Activated CD4-positive, alpha-beta T cell treated with anti-CD3 and anti-CD28 coated beads for 36 hours (primary cell): ENCODE measurements at regions of chr19 and their contacts with region 1.

Region 1: DNA sequence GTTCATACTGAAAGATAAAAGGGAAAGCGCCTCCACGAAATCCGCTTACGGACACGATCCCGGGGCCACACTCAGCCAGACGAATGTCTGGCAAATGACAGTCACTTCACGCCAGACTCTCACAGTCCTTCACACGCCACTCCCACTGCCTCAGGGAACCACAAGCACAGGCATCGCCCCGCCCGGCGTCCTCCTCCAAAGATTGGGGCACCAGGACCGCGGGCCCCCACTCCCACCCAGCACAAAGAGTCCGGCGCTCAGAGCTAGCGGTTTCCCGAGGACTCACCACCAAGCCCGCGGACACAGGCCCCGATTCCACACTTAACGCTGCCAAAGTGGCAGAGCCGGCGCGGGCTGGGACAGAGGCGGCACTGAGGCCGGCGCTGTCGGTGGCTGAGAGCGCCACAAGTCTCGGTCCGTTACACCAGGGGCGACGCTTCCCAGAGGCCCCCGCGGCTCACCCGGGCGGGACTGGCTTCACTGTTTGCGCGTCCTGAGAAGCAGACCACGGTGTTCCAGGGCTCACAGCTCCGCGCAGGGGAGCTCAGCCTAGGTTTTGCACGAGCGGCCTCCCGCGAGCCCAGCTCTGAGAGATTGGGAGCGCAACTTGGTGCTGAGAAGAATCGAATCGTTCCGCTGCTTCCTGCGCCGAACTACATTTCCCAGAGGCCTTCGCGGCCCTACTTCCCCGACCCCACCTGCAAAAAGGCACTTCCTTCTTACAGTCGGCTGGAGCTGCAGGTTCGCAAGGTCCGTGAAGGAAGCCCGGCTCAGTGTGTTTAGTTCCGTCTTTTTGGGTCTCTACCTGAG is at the start of gene ZNF569:
- DNase-seq: peak; percentile 93
- ATAC-seq: peak; percentile 71
- H3K4me3 Mint-ChIP-seq: peak within 1 kb of the TSS; percentile 94
- H3K27ac Mint-ChIP-seq: peak within 1 kb of the TSS; percentile 95
- H3K4me1 Mint-ChIP-seq: peaks cover 31% of the 10 kb centered on the region
- H3K27me3 Mint-ChIP-seq: no peaks in the 10 kb centered on the region
- total RNA-seq, gene ZNF569: 7.4 to 9.1 TPM

Region 2: GRCh38 chr19:36573020-36573885 is 893.8 kb before region 1 on chr19 and contains the start of gene ZNF529:
- CTCF ChIA-PET with region 1: no interaction called
- POLR2A ChIA-PET with region 1: no interaction called
- intact Hi-C with region 1: loop called in 1 of 2 experiments (anchors 2 kb)
- DNase-seq: peak; percentile 91
- ATAC-seq: peak; percentile 90
- H3K4me3 Mint-ChIP-seq: peak within 1 kb of the TSS; percentile 83
- H3K27ac Mint-ChIP-seq: peak within 1 kb of the TSS; percentile 93
- H3K4me1 Mint-ChIP-seq: peaks cover 27% of the 10 kb centered on the region
- H3K27me3 Mint-ChIP-seq: no peaks in the 10 kb centered on the region
- total RNA-seq, gene ZNF529: 12.5 to 19.2 TPM

Region 3: DNA sequence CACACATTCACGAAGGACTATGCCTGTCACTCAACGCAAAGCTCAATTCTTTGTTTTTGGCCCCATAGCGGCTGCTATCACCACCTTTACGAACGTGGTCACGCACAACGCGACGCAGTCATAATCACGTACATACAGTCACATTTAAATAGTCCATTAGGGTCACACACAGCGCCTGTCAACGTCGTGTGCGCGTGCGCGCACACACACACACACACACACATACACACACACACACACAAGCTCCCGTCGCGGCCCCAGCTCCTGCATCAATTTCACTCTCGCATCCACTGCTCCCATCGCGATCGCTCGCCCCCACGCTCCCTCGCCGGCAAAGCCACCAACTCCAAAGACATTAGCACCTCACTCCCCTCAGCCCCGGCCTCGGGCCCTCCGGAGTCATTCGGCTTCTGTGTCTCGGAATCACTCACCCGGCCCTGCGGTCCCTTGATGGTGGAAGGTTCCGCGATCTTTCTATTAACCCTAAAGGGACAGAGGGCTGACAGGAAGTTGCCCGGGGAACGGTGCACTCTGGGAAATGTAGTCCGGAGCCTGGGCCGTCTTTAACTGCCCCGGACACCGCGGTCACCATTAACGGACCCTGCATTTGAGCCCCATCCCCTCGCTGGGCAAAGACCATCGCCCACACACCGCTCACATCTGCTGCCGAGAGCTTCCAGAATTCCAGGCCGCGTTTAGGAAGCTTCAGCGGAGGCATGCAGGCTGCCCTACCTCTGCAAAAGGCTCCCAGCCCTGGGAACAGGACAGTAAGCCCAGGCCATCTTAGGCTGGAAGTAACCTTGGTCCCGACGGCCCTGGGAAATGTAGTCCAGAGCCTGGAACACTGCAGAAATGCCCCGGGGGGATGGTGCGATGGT is 628.9 kb before region 1 on chr19 and contains the start of gene ZNF790:
- CTCF ChIA-PET with region 1: no interaction called
- POLR2A ChIA-PET with region 1: no interaction called
- intact Hi-C with region 1: loop called (anchors 5 kb)
- DNase-seq: peak; percentile 92
- ATAC-seq: peak; percentile 97
- H3K4me3 Mint-ChIP-seq: no peak within 1 kb of the TSS
- H3K27ac Mint-ChIP-seq: peak within 1 kb of the TSS; percentile 72
- H3K4me1 Mint-ChIP-seq: peaks cover 2% of the 10 kb centered on the region
- H3K27me3 Mint-ChIP-seq: no peaks in the 10 kb centered on the region
- total RNA-seq, gene ZNF790: 7.1 to 8.8 TPM

Region 4: GRCh38 chr19:37217855-37218591 is 249.0 kb before region 1 on chr19 and contains the start of gene ZNF383:
- CTCF ChIA-PET with region 1: no interaction called
- POLR2A ChIA-PET with region 1: no interaction called
- intact Hi-C with region 1: loop called in 1 of 2 experiments (anchors 2 kb)
- DNase-seq: peak; percentile 89
- ATAC-seq: peak; percentile 87
- H3K4me3 Mint-ChIP-seq: peak within 1 kb of the TSS; percentile 93
- H3K27ac Mint-ChIP-seq: peak within 1 kb of the TSS; percentile 99
- H3K4me1 Mint-ChIP-seq: peaks cover 24% of the 10 kb centered on the region
- H3K27me3 Mint-ChIP-seq: no peaks in the 10 kb centered on the region
- total RNA-seq, gene ZNF383: 8.5 to 9.2 TPM

Region 5: DNA sequence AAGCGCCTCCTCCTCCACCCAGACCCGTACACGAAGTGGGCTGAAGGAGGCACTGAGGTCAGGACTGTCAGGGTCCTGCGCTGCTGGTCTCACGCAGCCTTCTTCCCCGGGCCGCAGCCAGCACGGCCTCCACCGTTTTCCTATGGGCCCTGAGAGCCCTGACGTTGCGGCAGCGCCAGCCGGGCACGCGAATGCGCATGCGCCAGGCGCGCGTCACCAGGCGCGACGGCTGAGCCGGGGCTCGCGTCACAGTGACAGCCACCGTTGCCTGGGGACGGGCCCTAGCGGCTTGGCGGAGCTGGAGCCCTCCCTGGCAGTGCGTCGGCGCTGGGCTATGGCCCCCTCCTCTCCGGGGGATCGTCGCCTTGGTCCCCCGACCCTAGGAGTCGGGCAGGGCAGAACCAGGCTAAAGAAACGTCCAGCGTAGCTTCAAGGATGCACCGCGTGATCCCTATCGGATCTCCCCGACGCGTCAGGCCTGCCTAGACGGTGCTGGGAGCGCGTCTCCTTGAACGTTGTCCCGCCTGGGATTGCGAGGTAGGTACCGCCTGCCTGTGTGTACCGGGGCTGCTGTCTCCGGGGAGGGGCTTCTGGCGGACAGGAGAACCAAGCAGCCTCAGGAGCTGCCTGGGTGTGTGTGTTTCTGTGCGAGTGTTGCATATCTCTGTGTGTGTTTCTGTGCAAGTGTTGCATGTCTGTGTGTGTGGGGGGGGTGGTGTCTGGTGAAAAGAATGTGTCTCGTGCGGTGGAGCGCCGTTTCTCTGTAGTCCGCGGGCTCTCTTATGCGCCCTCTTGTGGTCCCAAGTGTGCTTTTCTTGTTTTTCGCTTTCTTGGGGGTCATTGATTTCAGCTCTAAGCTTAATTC is 84.4 kb after region 1 on chr19:
- CTCF ChIA-PET with region 1: interaction called, 3 read pairs
- POLR2A ChIA-PET with region 1: no interaction called
- intact Hi-C with region 1: loop called in 1 of 2 experiments (anchors 1 kb)
- DNase-seq: peak; percentile 87
- ATAC-seq: peak; percentile 86
- H3K4me3 Mint-ChIP-seq: peak overlapping the region; percentile 84
- H3K27ac Mint-ChIP-seq: peak overlapping the region; percentile 87
- H3K4me1 Mint-ChIP-seq: peaks cover 3% of the 10 kb centered on the region
- H3K27me3 Mint-ChIP-seq: no peaks in the 10 kb centered on the region

Region 6: GRCh38 chr19:37572203-37572602 is 105.2 kb after region 1 on chr19:
- CTCF ChIA-PET with region 1: no interaction called
- POLR2A ChIA-PET with region 1: no interaction called
- intact Hi-C with region 1: no loop called
- DNase-seq: no peak
- ATAC-seq: no peak
- H3K4me3 Mint-ChIP-seq: no peak overlapping the region
- H3K27ac Mint-ChIP-seq: no peak overlapping the region
- H3K4me1 Mint-ChIP-seq: no peaks in the 10 kb centered on the region
- H3K27me3 Mint-ChIP-seq: no peaks in the 10 kb centered on the region

Region 7: GRCh38 chr19:37691881-37692504 is 225.0 kb after region 1 on chr19:
- CTCF ChIA-PET with region 1: no interaction called
- POLR2A ChIA-PET with region 1: no interaction called
- intact Hi-C with region 1: loop called in 1 of 2 experiments (anchors 2 kb)
- DNase-seq: peak; percentile 93
- ATAC-seq: peak; percentile 96
- H3K4me3 Mint-ChIP-seq: peak overlapping the region; percentile 92
- H3K27ac Mint-ChIP-seq: peak overlapping the region; percentile 95
- H3K4me1 Mint-ChIP-seq: peaks cover 9% of the 10 kb centered on the region
- H3K27me3 Mint-ChIP-seq: no peaks in the 10 kb centered on the region